ENCODE measurements at regions of chr17 and their contacts with region 1.

Region 1: DNA sequence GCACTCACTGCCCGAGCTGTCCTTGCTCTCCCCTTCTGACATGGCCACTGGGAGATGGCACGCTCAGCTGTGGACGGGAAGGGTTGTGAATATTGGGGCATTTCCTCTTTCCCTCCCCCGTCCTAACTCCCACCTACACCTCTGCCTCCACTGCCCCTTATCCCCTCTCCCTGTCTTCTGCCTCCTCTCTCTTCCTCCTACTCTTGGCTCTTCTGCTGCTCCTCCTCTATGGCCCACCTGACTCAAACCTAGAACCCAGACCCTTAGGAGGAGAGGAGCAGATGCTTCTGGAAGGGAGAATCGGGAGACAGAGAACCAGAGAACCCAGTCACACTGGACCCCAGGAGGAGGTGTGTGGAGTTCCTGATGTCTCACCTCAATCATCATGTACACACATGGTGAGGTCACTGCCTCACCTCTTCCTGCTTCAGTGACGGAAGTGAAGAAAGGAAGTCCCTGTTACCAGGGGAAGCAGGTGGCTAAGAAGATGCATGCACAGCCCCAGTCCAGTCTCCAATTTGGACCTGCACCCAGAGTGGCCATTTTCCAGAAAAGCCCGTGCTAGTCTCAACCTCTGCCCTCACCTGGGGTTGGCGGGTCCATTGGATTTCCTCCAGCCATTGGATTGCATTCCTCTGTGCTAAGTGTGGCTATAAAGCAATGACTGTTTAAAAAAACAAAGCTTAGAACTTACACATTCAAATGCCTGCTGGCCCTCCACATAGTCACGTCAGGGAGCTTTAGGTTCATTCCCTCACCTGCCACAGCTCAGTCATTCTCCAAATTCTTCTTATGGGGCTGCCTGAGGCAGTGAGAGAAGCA is 4.0 kb downstream of the RNF222 start:
- DNase-seq: no peak
- H3K4me3 ChIP-seq: no peak overlapping the region
- H3K27ac ChIP-seq: no peak overlapping the region
- H3K4me1 ChIP-seq: no peaks in the 10 kb centered on the region
- H3K27me3 ChIP-seq: peaks cover 31% of the 10 kb centered on the region
- CTCF ChIP-seq: no peak

Region 2: GRCh38 chr17:8820311-8821010 is 426.8 kb after region 1 on chr17:
- CTCF ChIA-PET with region 1: no interaction called
- POLR2A ChIA-PET with region 1: no interaction called
- intact Hi-C with region 1: no loop called
- DNase-seq: no peak
- H3K4me3 ChIP-seq: no peak overlapping the region
- H3K27ac ChIP-seq: no peak overlapping the region
- H3K4me1 ChIP-seq: no peaks in the 10 kb centered on the region
- H3K27me3 ChIP-seq: peaks cover 22% of the 10 kb centered on the region
- CTCF ChIP-seq: no peak

Region 3: GRCh38 chr17:9249245-9249953 is 855.8 kb after region 1 on chr17:
- CTCF ChIA-PET with region 1: no interaction called
- POLR2A ChIA-PET with region 1: interaction called, 10 read pairs
- intact Hi-C with region 1: no loop called
- DNase-seq: no peak
- H3K4me3 ChIP-seq: no peak overlapping the region
- H3K27ac ChIP-seq: no peak overlapping the region
- H3K4me1 ChIP-seq: no peaks in the 10 kb centered on the region
- H3K27me3 ChIP-seq: no peaks in the 10 kb centered on the region
- CTCF ChIP-seq: no peak

Measured in A673 (cell line).